ENCODE measurements at regions of chr18 and their contacts with region 1.

Region 1: DNA sequence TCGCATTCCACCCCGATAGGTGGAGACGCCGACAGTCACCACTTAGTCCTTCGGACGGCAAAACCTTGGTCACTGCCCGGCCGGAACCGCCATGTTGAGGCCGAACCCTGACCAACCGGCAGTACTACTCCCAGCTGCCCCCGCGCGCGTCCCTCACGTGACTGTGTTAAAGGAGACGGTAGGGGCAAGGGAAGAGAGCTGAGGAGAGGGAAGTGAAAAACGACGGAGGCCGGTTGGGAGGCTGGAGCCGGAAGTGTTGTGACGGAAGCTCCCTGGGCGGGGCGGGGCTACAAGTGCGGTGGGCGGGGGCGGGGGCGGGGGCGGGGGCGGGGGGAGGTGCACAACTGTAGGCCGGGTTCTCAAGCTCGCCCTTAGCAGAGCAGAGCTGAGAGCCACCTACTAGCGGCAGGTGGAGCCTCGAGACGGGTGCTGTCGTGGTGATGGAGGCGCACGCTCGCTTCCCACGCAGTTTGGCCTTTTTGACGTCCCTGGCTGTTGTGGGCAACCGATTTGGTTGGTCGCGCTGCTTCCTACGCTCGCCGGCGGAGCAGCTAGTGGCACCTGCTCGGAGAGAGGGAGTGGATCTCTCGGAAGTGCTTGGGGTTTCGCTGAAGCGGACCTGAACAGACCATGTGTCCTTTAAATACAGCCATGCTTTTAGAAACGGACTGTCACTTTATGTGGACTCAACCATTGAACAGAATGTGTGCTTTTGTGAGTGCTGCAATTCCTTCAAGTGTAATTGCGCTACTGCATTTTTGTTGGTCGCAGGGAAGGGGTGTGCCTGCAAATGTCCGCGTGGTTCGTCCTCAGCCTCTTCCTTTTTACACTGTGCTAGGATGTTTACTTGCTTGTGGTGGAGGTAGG is at the start of gene TRAPPC8:
- DNase-seq: peak; percentile 83 to 98 (median 86)
- ATAC-seq: peak; percentile 88
- H3K4me3 ChIP-seq: peak within 1 kb of the TSS; percentile 96
- H3K4me3 Mint-ChIP-seq: peak within 1 kb of the TSS; percentile 95
- H3K27ac ChIP-seq: peak within 1 kb of the TSS; percentile 93 to 97
- H3K27ac Mint-ChIP-seq: peak within 1 kb of the TSS; percentile 93
- H3K4me1 ChIP-seq: peaks cover 27% of the 10 kb centered on the region
- H3K4me1 Mint-ChIP-seq: peaks cover 52% of the 10 kb centered on the region
- H3K27me3 ChIP-seq: no peaks in the 10 kb centered on the region
- H3K27me3 Mint-ChIP-seq: no peaks in the 10 kb centered on the region
- CTCF ChIP-seq: peak; percentile 25
- total RNA-seq, gene TRAPPC8: 24.4 to 26.3 TPM

Region 2: DNA sequence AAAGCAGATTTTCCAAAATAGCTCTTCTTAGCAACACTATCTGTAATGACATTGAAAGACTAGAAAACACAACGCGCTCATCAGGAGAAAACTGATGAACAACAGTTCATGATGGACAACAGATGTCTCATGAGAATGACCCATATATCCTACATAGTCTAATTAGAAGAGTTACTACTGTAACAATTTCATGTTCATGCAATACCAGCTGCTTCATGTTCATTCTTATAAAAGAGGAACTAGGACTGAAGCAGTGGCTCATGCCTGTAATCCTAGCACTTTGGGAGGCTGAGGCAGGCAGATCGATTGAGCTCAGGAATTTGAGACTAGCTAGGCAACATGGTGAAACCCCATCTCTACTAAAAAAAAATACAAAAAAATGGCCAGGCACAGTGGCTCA is 23.0 kb before region 1 on chr18:
- CTCF ChIA-PET with region 1: interaction called, 5 read pairs
- POLR2A ChIA-PET with region 1: interaction called, 7 read pairs
- intact Hi-C with region 1: loop called in 1 of 2 experiments (anchors 2 kb)
- DNase-seq: no peak
- ATAC-seq: no peak
- H3K4me3 ChIP-seq: no peak overlapping the region
- H3K4me3 Mint-ChIP-seq: no peak overlapping the region
- H3K27ac ChIP-seq: no peak overlapping the region
- H3K27ac Mint-ChIP-seq: no peak overlapping the region
- H3K4me1 ChIP-seq: no peaks in the 10 kb centered on the region
- H3K4me1 Mint-ChIP-seq: peaks cover 15% of the 10 kb centered on the region
- H3K27me3 ChIP-seq: no peaks in the 10 kb centered on the region
- H3K27me3 Mint-ChIP-seq: no peaks in the 10 kb centered on the region
- CTCF ChIP-seq: no peak

Region 3: DNA sequence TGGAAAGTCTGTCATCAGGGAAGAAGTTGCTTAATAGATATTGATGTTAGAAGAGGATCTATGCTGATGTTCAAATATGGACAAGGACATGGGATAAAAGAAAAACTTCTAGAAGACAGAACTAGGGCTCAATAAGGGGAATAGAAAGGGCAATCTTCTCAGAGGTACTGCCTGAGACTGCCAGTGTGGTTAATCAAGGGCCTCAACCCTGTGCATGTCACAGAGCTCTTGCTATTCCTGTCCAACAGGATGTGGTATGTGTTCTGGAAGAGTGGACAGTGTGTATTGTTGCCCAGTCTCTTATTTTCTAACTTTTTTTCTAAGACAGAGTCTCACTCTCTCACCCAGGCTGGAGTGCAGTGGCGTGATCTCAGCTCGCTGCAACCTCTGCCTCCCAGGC is 47.6 kb after region 1 on chr18:
- CTCF ChIA-PET with region 1: no interaction called
- POLR2A ChIA-PET with region 1: no interaction called
- intact Hi-C with region 1: no loop called
- DNase-seq: no peak
- ATAC-seq: no peak
- H3K4me3 ChIP-seq: no peak overlapping the region
- H3K4me3 Mint-ChIP-seq: no peak overlapping the region
- H3K27ac ChIP-seq: no peak overlapping the region
- H3K27ac Mint-ChIP-seq: no peak overlapping the region
- H3K4me1 ChIP-seq: no peaks in the 10 kb centered on the region
- H3K4me1 Mint-ChIP-seq: no peaks in the 10 kb centered on the region
- H3K27me3 ChIP-seq: no peaks in the 10 kb centered on the region
- H3K27me3 Mint-ChIP-seq: no peaks in the 10 kb centered on the region
- CTCF ChIP-seq: no peak

Region 4: GRCh38 chr18:32026491-32027086 is 83.4 kb after region 1 on chr18:
- CTCF ChIA-PET with region 1: no interaction called
- POLR2A ChIA-PET with region 1: interaction called, 10 read pairs
- intact Hi-C with region 1: no loop called
- DNase-seq: no peak
- ATAC-seq: no peak
- H3K4me3 ChIP-seq: no peak overlapping the region
- H3K4me3 Mint-ChIP-seq: peak overlapping the region; percentile 44
- H3K27ac ChIP-seq: no peak overlapping the region
- H3K27ac Mint-ChIP-seq: peak overlapping the region; percentile 50
- H3K4me1 ChIP-seq: peaks cover 53% of the 10 kb centered on the region
- H3K4me1 Mint-ChIP-seq: peaks cover 91% of the 10 kb centered on the region
- H3K27me3 ChIP-seq: no peaks in the 10 kb centered on the region
- H3K27me3 Mint-ChIP-seq: no peaks in the 10 kb centered on the region
- CTCF ChIP-seq: no peak

Region 5: GRCh38 chr18:32040936-32041335 is 97.7 kb after region 1 on chr18:
- CTCF ChIA-PET with region 1: no interaction called
- POLR2A ChIA-PET with region 1: interaction called, 12 read pairs
- intact Hi-C with region 1: no loop called
- DNase-seq: peak in 11 of 14 experiments; percentile 12 to 84 (median 32)
- ATAC-seq: peak; percentile 71
- H3K4me3 ChIP-seq: peak overlapping the region; percentile 2
- H3K4me3 Mint-ChIP-seq: peak overlapping the region; percentile 77
- H3K27ac ChIP-seq: peak overlapping the region in 1 of 2 donors; percentile 8
- H3K27ac Mint-ChIP-seq: peak overlapping the region; percentile 74
- H3K4me1 ChIP-seq: peaks cover 38% of the 10 kb centered on the region
- H3K4me1 Mint-ChIP-seq: peaks cover 62% of the 10 kb centered on the region
- H3K27me3 ChIP-seq: no peaks in the 10 kb centered on the region
- H3K27me3 Mint-ChIP-seq: no peaks in the 10 kb centered on the region
- CTCF ChIP-seq: no peak

Region 6: DNA sequence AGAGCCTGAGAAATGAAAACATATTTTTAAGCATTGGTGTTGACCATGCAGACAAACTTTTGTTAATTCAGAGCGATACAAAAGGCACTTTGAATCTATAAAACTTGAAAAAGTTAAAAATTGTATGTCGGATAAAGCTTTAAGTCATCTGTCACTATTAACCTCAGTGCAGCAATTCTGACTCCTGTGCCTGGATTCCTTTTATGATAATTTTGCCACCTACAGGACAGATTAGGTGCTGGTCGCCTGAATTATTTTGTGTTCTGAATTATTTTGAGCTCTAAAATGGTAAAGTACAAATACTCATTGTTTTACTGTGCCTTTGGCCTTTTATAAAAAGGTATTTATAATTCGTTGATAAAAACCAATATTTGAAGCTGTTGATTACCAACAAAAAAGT is 129.1 kb after region 1 on chr18:
- CTCF ChIA-PET with region 1: interaction called, 4 read pairs
- POLR2A ChIA-PET with region 1: interaction called, 14 read pairs
- intact Hi-C with region 1: loop called in 1 of 2 experiments (anchors 5 kb)
- DNase-seq: peak in 5 of 14 experiments; percentile 4 to 61 (median 61)
- ATAC-seq: peak; percentile 80
- H3K4me3 ChIP-seq: no peak overlapping the region
- H3K4me3 Mint-ChIP-seq: no peak overlapping the region
- H3K27ac ChIP-seq: no peak overlapping the region
- H3K27ac Mint-ChIP-seq: peak overlapping the region; percentile 35
- H3K4me1 ChIP-seq: no peaks in the 10 kb centered on the region
- H3K4me1 Mint-ChIP-seq: peaks cover 23% of the 10 kb centered on the region
- H3K27me3 ChIP-seq: no peaks in the 10 kb centered on the region
- H3K27me3 Mint-ChIP-seq: no peaks in the 10 kb centered on the region
- CTCF ChIP-seq: peak; percentile 66

Region 7: DNA sequence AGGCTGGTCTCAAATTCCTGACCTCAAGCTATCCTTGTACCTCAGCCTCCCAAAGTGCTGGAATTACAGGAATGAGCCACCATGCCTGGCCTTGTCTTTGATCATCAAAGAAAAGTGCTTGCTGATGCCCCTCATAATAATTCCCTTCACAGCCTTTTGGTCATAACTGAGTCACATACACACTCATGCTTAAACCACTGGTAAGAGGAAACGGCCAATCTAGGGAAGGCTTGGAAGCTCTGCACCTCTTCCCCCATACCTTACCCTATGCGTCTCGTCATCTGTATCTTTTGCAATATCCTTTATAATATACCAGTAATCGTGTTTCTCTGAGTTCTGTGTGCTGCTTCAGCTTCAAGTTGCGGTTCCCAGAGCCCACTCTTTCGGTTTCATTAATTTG is 143.6 kb after region 1 on chr18:
- CTCF ChIA-PET with region 1: interaction called, 5 read pairs
- POLR2A ChIA-PET with region 1: interaction called, 65 read pairs
- intact Hi-C with region 1: loop called (anchors 1 kb)
- DNase-seq: peak in 2 of 14 experiments; percentile 37 to 56
- ATAC-seq: no peak
- H3K4me3 ChIP-seq: no peak overlapping the region
- H3K4me3 Mint-ChIP-seq: peak overlapping the region; percentile 30
- H3K27ac ChIP-seq: no peak overlapping the region
- H3K27ac Mint-ChIP-seq: peak overlapping the region; percentile 43
- H3K4me1 ChIP-seq: peaks cover 38% of the 10 kb centered on the region
- H3K4me1 Mint-ChIP-seq: peaks cover 53% of the 10 kb centered on the region
- H3K27me3 ChIP-seq: no peaks in the 10 kb centered on the region
- H3K27me3 Mint-ChIP-seq: peaks cover 5% of the 10 kb centered on the region
- CTCF ChIP-seq: no peak

Region 8: GRCh38 chr18:32092422-32093101 is 149.3 kb after region 1 on chr18:
- CTCF ChIA-PET with region 1: interaction called, 5 read pairs
- POLR2A ChIA-PET with region 1: interaction called, 65 read pairs
- intact Hi-C with region 1: loop called (anchors 1 kb)
- DNase-seq: peak; percentile 99 to 100 (median 100)
- ATAC-seq: peak; percentile 87
- H3K4me3 ChIP-seq: peak overlapping the region; percentile 92
- H3K4me3 Mint-ChIP-seq: peak overlapping the region; percentile 100
- H3K27ac ChIP-seq: peak overlapping the region; percentile 98 to 100
- H3K27ac Mint-ChIP-seq: peak overlapping the region; percentile 85
- H3K4me1 ChIP-seq: peaks cover 43% of the 10 kb centered on the region
- H3K4me1 Mint-ChIP-seq: peaks cover 52% of the 10 kb centered on the region
- H3K27me3 ChIP-seq: no peaks in the 10 kb centered on the region
- H3K27me3 Mint-ChIP-seq: no peaks in the 10 kb centered on the region
- CTCF ChIP-seq: no peak

Region 9: DNA sequence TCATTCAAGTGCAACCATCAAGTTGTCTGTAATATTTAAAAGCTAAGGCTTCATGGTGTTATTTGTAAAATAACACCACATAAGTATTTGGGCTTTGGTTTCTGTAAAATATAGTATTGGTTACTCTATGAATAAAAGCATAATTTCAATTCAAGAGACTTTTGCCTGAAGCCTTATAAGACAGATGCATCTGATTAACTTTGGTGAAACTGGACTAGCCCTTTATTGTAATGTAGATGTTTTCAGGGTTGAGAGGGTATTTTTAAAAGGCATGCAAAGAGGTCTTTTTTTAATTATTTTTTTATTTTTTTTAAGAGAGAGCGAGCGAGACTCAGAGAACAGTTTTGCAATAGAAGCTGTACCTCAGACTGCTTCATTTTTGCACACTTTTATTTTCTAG is 1701.3 kb after region 1 on chr18:
- CTCF ChIA-PET with region 1: no interaction called
- POLR2A ChIA-PET with region 1: no interaction called
- intact Hi-C with region 1: no loop called
- DNase-seq: no peak
- ATAC-seq: no peak
- H3K4me3 ChIP-seq: no peak overlapping the region
- H3K4me3 Mint-ChIP-seq: no peak overlapping the region
- H3K27ac ChIP-seq: no peak overlapping the region
- H3K27ac Mint-ChIP-seq: no peak overlapping the region
- H3K4me1 ChIP-seq: no peaks in the 10 kb centered on the region
- H3K4me1 Mint-ChIP-seq: no peaks in the 10 kb centered on the region
- H3K27me3 ChIP-seq: no peaks in the 10 kb centered on the region
- H3K27me3 Mint-ChIP-seq: no peaks in the 10 kb centered on the region
- CTCF ChIP-seq: no peak